AG04449 (cell line): ENCODE measurements at regions of chr10 and their contacts with region 1.

Region 1: DNA sequence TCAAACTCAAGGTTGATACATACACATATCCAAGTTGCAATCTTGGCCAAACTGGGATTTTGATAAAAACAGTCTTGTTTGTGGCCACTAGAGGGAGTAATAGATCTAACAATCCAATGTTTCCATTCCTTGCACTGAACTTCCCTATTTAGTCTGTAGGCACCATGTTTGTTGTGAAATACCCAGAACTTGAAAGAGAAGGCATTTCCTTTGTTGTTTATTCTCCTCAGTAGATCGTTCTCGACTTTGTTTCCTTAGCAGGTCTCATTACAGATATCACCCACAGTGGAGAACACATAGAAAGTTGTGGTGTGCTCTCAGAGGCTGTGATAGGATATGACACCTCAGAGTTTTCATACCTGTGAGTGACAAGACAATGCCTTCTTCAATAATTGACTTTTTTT is 70.3 kb upstream of the MXI1 start:
- DNase-seq: peak; percentile 38
- H3K4me3 ChIP-seq: no peak overlapping the region
- CTCF ChIP-seq: peak; percentile 51

Region 2: DNA sequence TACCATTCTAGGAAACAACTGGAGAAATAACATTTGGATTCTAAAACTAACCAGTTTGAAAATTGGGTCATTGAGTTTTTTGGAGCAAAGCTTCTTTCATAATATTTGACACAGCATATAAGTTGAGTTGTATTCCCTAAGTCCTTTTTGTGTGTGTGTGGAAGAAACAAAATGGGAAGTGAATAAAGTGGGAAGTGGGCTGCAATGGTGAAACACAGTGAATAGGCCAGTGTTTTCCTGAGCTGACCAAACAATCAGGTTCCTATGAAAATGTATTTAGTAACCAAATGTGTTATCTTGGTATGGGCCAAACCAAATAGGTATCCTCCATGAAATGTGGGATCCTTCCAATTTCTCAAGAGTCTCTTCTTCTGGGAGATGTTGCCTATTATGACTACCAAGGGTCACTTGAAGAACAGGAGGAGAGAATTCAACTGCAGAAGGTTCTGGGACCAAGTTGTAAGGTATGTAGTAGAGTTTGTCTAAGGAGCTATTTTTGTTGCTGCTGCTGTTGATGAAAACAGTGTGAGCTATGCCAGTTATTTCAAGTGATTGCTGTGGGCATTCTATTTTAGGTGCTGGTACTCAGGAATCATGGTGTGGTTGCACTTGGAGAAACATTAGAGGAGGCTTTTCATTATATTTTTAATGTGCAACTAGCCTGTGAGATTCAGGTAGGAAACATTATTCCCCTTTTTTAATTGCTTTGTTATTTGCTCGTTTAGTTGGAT is 18.1 kb before region 1 on chr10:
- CTCF ChIA-PET with region 1: interaction called, 18 read pairs
- POLR2A ChIA-PET with region 1: no interaction called
- DNase-seq: no peak
- H3K4me3 ChIP-seq: no peak overlapping the region
- CTCF ChIP-seq: no peak

Region 3: DNA sequence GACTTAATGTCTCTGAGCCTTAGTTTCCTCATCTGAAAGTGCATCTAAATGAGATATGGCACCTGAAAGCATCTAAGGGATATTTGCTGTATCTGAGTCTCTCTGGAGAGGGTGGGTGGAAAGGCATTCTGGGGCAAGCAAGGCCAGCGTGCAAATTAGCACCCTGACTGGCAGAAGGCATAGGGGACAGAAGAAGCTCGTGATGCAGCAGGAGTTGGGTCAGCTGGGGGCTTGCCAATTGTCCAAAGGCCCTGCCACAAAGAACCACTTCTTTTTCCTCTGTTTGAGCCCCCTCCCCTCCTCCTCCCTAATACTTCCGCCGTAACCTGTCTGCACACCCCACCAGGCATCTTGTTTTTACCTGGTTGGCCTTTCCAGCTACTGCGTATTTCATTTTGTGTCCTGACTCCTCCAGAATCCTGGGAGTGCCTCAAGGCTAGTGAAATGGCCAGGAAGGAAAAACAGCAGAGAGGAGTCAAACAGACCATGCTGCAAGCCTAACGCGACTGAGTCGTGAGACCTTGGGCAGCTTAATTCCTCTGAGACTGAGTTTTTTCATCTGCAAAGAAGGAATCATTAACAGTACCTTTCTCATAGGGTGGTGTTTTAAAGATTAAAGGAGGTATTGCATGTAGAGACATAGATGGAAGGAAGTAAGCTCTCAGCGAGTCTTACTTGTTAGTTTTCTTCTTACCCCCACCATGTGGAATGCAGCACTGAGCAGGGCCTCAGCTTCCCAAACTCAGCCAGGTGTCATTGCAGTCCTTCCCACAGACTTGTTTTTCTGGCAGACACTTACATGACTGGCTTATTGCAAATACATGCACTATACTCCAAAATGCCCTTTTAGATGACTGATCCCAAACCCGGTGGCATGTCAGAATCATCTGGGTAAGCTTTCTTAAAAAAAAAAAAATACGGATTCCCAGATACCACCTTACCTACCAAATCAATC is 21.2 kb after region 1 on chr10:
- CTCF ChIA-PET with region 1: interaction called, 20 read pairs
- POLR2A ChIA-PET with region 1: no interaction called
- DNase-seq: no peak
- H3K4me3 ChIP-seq: no peak overlapping the region
- CTCF ChIP-seq: no peak

Region 4: DNA sequence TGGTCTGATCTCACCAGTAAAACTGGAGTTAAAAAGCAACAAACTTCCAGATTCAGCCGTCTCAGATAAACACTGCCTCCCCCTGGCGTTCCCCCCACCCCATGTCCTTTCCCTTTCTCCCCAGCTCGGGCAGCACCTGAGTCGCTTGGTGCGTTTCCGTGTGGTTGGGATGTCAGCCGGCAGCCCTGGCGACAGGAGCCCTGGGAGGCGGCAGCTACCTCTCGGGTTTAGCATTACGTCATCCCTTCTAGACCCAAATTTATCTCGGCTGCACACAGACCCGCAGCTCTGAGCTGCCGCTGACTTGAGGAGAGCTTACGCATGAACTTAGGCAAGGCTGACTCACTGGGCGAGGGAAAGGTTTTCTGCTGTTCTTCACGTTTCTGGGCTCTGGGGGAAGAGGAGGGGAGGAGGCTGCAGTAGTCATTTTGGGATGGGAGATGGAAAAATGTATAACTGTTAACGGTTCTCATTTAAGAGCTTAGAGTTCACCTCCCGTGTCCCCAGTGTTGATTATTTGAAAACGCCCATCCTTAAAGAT is 84.6 kb after region 1 on chr10:
- CTCF ChIA-PET with region 1: interaction called, 40 read pairs
- POLR2A ChIA-PET with region 1: interaction called, 6 read pairs
- DNase-seq: peak; percentile 85
- H3K4me3 ChIP-seq: peak overlapping the region; percentile 61
- CTCF ChIP-seq: peak; percentile 36

Region 5: DNA sequence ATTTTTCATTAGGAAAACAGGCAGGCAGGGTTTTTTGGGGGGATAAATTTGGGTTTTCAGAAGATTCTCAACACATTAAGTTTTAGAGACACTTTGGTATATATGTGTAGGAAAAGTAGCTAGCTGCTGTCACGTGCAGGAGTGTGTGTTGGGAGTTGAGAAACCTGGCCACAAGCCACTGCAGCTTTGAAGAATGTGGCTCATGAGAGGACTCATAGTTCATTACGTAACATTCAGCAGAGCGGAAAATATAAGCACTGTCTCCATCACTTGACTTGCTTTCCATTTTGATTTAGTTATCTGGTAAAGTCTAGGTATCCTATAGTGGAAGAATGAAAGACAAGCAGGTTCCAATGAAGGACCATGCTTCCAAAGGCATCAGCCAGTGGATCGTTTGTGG is 136.3 kb after region 1 on chr10:
- CTCF ChIA-PET with region 1: interaction called, 325 read pairs
- POLR2A ChIA-PET with region 1: no interaction called
- DNase-seq: peak; percentile 34
- H3K4me3 ChIP-seq: no peak overlapping the region
- CTCF ChIP-seq: no peak

Region 6: DNA sequence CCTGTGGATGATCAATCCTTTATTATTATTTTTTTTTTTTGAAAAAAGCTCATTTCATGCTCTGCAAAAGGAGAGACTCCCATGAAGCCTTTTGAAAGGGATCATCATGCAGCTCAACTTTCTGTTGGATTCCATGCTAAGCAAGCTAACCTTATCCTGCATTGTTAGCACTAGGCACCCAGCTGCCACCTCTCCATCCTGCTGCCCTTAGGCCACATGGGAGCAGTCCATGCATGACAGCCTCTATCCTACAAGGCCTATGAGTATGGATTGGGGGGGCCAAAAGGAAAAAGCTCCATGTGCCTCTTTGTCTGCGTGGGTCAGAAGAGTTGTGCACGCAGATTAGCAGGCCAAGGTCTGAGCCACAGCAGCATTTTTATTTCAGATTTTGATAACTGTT is 148.4 kb after region 1 on chr10:
- CTCF ChIA-PET with region 1: interaction called, 325 read pairs
- POLR2A ChIA-PET with region 1: no interaction called
- DNase-seq: no peak
- H3K4me3 ChIP-seq: no peak overlapping the region
- CTCF ChIP-seq: no peak

Region 7: GRCh38 chr10:110395725-110396651 is 258.8 kb after region 1 on chr10:
- CTCF ChIA-PET with region 1: no interaction called
- POLR2A ChIA-PET with region 1: no interaction called
- DNase-seq: peak; percentile 77
- H3K4me3 ChIP-seq: no peak overlapping the region
- CTCF ChIP-seq: no peak

Region 8: DNA sequence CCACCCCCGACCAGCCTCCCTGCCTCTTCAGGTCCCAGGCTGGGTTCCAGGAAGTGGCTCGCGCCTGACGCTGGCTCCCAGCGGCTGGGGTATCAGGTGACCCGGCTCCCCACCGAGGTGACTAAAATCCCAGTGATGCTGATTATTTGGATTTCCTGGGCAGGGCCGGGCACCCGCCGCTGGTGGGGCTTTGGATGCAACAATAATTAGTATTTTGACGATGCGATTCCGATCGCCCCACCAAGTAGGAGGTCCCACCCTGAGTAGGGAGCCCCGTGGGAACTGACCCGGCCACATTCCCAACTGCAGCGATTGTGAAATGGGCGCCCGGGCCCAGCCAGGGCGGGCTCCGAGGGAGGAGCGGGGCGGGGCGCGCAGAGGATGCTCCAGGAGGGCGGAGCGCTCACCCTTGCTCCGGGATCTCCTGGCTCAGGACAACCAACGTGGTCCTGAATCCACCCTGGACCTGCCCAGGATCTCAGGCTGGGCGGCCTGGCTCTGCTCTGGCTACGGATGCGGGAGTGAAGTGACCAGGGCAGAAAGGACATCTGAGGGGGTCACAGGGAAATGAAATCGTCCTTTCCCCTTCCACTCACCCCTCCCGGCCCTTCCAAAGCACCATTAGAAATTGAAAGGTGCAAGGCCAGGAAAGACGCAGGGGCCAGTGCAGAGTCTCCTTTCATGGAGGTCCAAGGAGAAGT is 393.1 kb after region 1 on chr10:
- CTCF ChIA-PET with region 1: no interaction called
- POLR2A ChIA-PET with region 1: no interaction called
- DNase-seq: no peak
- H3K4me3 ChIP-seq: peak overlapping the region; percentile 20
- CTCF ChIP-seq: no peak